ENCODE measurements at regions of chr9 and their contacts with region 1.

Region 1: GRCh38 chr9:92438900-92439526 is 14.7 kb upstream of the OMD start:
- DNase-seq: peak; percentile 19
- H3K4me3 ChIP-seq: no peak overlapping the region
- H3K27ac ChIP-seq: peak overlapping the region in 1 of 2 experiments; percentile 41; a peak in 1 of 4 replicates
- H3K4me1 ChIP-seq: peaks cover 0 to 5% of the 10 kb centered on the region in 2 experiments; a peak in 1 of 4 replicates
- H3K27me3 ChIP-seq: no peaks in the 10 kb centered on the region
- CTCF ChIP-seq: peak; percentile 55
- EP300 ChIP-seq: no peak
- RAD21 ChIP-seq: peak; percentile 66

Region 2: DNA sequence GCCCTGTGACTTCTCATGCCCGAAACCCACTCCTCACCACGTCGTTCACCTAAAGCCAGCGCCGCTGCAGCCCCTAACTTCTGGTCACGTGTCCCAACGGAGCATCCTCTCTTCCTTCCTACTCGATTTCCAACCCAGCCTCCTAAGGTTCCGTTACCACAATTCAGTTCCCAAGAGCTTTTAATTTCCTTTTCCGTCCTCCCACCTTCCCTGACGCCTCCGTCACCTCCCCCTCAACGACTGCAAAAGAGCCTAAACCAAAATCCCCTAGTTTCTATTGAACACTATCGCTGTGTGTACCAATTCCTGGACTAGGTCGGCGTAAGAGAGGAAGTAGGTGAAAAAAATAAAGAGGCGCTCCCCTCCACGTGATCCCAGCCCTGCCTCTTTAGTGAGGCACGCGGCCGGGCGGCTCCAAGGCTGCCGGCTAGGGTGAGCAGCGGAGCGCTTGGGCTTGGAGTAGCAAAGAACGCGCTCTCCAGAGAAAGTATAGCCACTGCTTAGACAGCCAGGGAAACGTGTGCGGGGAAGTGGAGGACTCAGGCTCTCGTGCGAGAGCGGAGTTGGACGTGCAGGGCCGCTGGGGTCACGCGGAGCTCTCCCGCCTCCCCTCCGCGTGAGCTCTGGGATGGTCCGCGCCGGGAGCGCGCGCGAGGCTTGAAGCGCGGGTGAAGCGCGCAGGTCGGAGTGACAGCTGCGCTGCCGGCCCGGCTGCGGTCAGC is 113.6 kb before region 1 on chr9 and contains the starts of genes CENPP and NOL8:
- CTCF ChIA-PET with region 1: interaction called, 61 read pairs
- POLR2A ChIA-PET with region 1: interaction called, 6 read pairs
- DNase-seq: peak; percentile 91
- H3K4me3 ChIP-seq: peak within 1 kb of the TSS; percentile 92 to 96
- H3K27ac ChIP-seq: peak within 1 kb of the TSS; percentile 96 to 97
- H3K4me1 ChIP-seq: peaks cover 16% of the 10 kb centered on the region in 2 experiments; a peak in 3 of 4 replicates
- H3K27me3 ChIP-seq: no peaks in the 10 kb centered on the region
- CTCF ChIP-seq: no peak
- EP300 ChIP-seq: peak in 1 of 2 experiments; percentile 61; a peak in 1 of 4 replicates
- RAD21 ChIP-seq: no peak
- polyA plus RNA-seq, gene CENPP: 1.3 and 1.5 TPM in 2 replicates
- polyA plus RNA-seq, gene NOL8: 9.6 and 13.2 TPM in 2 replicates

Region 3: DNA sequence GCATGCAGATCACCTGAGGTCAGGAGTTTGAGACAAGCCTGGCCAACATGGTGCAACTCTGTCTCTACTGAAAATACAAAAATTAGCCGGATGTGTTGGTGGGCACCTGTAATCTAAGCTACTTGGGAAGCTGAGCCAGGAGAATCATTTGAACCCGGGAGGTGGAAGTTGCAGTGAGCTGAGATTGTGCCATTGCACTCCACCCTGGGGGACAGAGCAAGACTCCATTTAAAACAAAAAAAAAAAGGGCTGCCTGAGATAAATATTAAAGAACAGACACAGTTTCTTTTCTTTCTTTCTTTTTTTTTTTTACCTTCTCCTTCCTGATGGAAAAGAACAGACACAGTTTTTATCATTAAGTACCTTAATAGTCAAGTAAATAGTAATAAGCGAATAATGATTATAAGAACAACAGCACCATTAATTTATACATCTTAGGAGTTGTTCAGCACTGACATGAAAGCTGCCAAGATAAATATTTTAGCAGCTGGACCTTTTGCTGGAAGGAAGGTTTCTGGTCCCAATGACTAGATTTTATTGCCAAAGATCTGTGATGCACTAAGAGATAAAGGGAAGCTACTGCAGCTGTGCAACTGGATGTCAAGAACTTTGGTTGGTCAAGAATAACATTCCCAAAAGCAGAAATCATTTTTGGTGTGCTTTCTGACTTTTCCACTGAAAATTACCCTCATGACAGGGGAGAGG is 106.3 kb before region 1 on chr9:
- CTCF ChIA-PET with region 1: interaction called, 61 read pairs
- POLR2A ChIA-PET with region 1: no interaction called
- DNase-seq: peak; percentile 30
- H3K4me3 ChIP-seq: no peak overlapping the region
- H3K27ac ChIP-seq: peak overlapping the region; percentile 12 to 19; a peak in 2 of 4 replicates
- H3K4me1 ChIP-seq: peaks cover 4 to 6% of the 10 kb centered on the region in 2 experiments; a peak in 3 of 4 replicates
- H3K27me3 ChIP-seq: no peaks in the 10 kb centered on the region
- CTCF ChIP-seq: no peak
- EP300 ChIP-seq: peak in 1 of 2 experiments; percentile 56; a peak in 1 of 4 replicates
- RAD21 ChIP-seq: no peak

Region 4: DNA sequence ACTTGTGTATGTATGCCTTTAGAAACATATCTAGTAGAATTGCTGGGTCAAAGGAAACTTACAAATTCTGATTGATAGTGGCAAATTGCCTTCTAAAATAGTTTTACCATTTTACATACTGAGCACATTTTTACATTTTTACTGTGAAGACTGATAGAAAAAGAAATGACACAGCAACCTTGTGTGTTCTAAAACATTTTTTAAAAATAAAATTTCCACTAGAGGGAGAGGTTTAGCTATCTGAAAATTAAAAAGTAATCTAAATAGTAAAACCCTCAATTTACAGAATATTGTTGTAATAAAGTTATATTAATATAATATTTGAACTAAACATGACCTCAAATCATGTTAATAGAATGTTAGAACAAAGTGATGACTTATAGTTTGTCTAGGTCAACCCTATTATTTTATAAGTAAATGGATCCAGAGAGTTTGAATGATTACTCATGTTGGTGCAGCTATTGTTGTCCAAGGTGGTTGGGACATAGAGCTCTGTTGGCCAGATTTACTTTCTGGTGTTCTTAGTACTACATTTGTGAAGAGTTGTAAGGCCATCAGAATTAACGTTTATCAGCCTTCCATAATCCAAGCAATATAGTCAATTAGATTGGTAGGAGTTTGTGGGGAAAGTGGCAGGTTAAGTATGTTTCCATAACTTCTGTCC is 96.1 kb before region 1 on chr9:
- CTCF ChIA-PET with region 1: interaction called, 23 read pairs
- POLR2A ChIA-PET with region 1: no interaction called
- DNase-seq: no peak
- H3K4me3 ChIP-seq: no peak overlapping the region
- H3K27ac ChIP-seq: peak overlapping the region in 1 of 2 experiments; percentile 87; a peak in 1 of 4 replicates
- H3K4me1 ChIP-seq: peaks cover 0 to 4% of the 10 kb centered on the region in 2 experiments; a peak in 2 of 4 replicates
- H3K27me3 ChIP-seq: no peaks in the 10 kb centered on the region
- CTCF ChIP-seq: peak; percentile 55
- EP300 ChIP-seq: no peak
- RAD21 ChIP-seq: peak; percentile 44